Left cardiac atrium (tissue), 4 donors: ENCODE measurements at regions of chr7 and their contacts with region 1.

Region 1: GRCh38 chr7:84393786-84394185 is 199.2 kb upstream of the SEMA3A start:
- DNase-seq: no peak
- ATAC-seq: no peak

Region 2: GRCh38 chr7:84317536-84317935 is 76.2 kb before region 1 on chr7:
- intact Hi-C with region 1: no loop called
- DNase-seq: no peak
- ATAC-seq: no peak

Region 3: DNA sequence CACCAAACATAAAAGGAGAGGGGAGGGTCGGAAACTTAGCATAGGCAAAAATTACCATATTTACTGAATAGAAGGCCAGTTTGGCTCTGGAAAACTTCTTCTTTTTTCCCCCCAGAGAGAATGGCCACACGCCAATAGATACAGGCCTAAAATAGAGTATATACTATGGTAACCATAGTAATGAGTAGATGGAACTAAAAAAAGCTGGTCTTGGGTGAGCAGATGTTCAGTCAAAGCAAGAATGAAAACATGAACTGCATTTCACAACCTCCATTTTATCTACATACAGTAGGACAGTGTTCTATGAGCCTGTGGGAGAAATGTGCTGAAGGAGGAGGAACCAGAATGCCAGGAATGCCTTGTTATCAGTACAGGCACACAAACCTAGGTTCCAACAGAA is 57.5 kb before region 1 on chr7:
- intact Hi-C with region 1: loop called in 1 of 2 experiments (anchors 5 kb)
- DNase-seq: no peak
- ATAC-seq: peak in 1 of 2 donors; percentile 65